ENCODE measurements at regions of chr4 and their contacts with region 1.

Region 1: DNA sequence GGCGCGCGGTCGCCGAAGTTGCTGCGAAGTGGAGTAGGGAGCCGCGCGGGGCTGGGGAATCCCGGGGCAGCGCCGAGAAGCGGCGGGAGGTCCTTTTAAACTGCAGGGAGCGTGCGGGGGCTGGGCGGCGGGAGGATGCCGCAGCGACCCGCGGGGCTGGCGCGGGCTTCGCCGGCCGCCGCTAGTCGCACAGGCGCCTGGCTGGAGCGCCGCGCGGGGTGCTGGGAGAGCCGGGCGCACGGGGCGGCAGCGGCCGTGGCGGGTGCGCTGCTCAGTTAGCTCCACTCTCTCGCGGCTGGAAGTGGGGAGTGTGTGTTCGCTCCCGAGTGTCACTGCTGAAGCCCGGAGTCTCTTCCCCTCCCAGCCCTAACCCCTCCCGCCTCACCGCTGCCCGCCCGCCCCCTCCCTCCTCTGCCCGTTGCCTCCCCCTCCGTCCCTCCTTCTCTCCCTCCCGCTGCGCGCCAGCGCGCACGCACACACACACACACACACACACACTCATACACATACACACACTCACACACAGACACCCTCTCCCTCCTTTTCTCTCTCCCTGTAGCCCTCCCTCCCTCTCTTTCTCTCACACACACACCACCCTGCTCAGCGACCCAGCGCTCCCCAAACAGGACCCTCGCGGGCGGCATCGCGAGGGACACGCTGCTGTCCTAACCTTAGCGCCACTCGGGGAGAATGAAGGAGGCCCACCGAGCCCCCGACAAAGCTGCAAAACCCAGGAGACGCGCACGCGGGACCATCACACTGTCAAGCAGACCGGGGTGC is at the start of gene NDNF:
- DNase-seq: peak; percentile 63
- H3K4me3 Mint-ChIP-seq: peak within 1 kb of the TSS; percentile 71
- H3K27ac Mint-ChIP-seq: no peak within 1 kb of the TSS
- H3K4me1 Mint-ChIP-seq: peaks cover 18% of the 10 kb centered on the region
- H3K27me3 Mint-ChIP-seq: peaks cover 56% of the 10 kb centered on the region
- total RNA-seq, gene NDNF: not detected

Region 2: GRCh38 chr4:120922381-120923206 is 149.8 kb before region 1 on chr4 and contains the start of gene PRDM5:
- CTCF ChIA-PET with region 1: no interaction called
- POLR2A ChIA-PET with region 1: no interaction called
- intact Hi-C with region 1: loop called (anchors 1 kb)
- DNase-seq: peak; percentile 31
- H3K4me3 Mint-ChIP-seq: peak within 1 kb of the TSS; percentile 77
- H3K27ac Mint-ChIP-seq: no peak within 1 kb of the TSS
- H3K4me1 Mint-ChIP-seq: peaks cover 8% of the 10 kb centered on the region
- H3K27me3 Mint-ChIP-seq: peaks cover 36% of the 10 kb centered on the region
- total RNA-seq, gene PRDM5: 0.17 TPM

Region 3: DNA sequence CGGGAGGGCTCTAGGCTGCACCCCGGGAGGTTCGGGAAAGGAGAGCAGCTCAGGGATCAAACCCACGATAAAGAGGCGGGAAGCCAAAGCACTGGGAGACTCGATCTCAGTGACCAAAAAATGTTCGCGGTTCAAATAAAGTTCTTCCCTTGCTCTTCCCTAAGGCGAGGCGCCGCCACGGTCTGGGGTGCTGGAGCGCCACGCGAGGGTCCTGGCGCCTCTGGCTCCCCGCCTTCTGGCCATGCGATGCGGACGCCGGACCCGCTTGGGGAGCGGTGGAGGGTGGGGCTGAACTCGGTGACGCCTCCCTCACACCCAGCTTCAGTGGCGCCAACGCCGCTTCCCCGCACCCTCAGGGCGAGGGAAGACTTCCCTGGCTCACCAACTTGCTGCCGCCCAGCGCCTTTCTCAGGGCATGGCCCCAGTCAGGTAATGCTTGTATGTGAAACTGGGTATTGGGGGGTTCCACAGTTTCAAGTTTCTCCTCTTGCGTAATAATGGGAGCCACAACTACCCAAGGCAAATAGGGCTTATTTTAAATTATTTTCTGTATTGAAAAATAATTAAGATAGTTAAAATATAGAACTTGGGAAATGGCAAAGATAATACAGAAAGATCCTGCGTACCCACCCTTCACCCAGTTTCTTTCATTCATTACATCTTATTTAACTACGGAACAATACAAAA is 308.5 kb after region 1 on chr4 and contains the start of gene QRFPR:
- CTCF ChIA-PET with region 1: no interaction called
- POLR2A ChIA-PET with region 1: no interaction called
- intact Hi-C with region 1: loop called (anchors 5 kb)
- DNase-seq: peak; percentile 9
- H3K4me3 Mint-ChIP-seq: peak within 1 kb of the TSS; percentile 31
- H3K27ac Mint-ChIP-seq: no peak within 1 kb of the TSS
- H3K4me1 Mint-ChIP-seq: peaks cover 8% of the 10 kb centered on the region
- H3K27me3 Mint-ChIP-seq: peaks cover 54% of the 10 kb centered on the region
- total RNA-seq, gene QRFPR: not detected